Activated CD8-positive, alpha-beta T cell treated with anti-CD3 and anti-CD28 coated beads, Interleukin-2, amount 10 ng/mL, durations not matched to agents 7 days and 5 days (primary cell): ENCODE measurements at regions of chr3 and their contacts with region 1.

Region 1: DNA sequence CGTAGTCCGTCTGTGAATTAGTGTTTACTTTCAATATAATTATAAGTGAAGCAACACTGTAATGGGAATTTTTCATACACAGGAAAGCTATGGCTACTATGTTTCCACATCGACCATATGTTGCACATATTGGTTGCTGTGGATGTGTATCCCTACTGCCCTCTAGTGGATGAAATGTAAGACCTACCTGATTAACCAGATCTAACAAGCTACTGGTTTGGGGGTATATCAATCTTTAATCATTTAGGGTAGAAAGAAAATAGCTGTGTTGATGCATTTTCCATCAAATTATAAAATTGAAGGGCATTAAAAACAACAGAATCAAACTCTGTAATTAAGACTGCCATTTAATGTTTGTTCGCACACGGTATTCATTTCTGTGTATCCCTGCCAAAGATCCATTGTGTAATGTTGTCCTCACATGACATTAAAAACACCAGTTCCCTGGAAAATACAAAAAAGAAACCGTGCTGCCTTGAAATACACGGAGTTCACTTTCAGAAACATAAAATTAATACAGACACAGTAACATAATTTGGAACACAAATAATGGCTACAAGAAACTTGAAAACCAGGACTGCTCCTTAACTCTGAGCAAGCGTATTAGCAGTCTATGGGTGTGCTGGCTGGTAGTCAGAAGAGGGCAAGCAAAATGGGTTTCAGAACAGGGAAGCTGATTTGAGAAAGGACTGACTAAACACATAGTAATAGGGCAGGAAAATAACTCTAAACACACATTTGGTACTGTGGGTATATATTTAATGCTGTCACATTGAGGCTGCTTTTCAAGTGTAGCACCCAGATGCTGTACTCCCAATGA is 125.1 kb downstream of the TIGIT start:
- DNase-seq: peak; percentile 28
- ATAC-seq: peak; percentile 86
- H3K4me3 Mint-ChIP-seq: no peak overlapping the region
- H3K27ac Mint-ChIP-seq: no peak overlapping the region
- H3K4me1 Mint-ChIP-seq: peaks cover 6% of the 10 kb centered on the region
- H3K27me3 Mint-ChIP-seq: no peaks in the 10 kb centered on the region

Region 2: GRCh38 chr3:114143817-114144216 is 275.1 kb before region 1 on chr3:
- CTCF ChIA-PET with region 1: interaction called, 11 read pairs
- POLR2A ChIA-PET with region 1: no interaction called
- DNase-seq: no peak
- ATAC-seq: no peak
- H3K4me3 Mint-ChIP-seq: no peak overlapping the region
- H3K27ac Mint-ChIP-seq: no peak overlapping the region
- H3K4me1 Mint-ChIP-seq: no peaks in the 10 kb centered on the region
- H3K27me3 Mint-ChIP-seq: no peaks in the 10 kb centered on the region

Region 3: GRCh38 chr3:114152519-114153151 is 266.3 kb before region 1 on chr3:
- CTCF ChIA-PET with region 1: interaction called, 63 read pairs
- POLR2A ChIA-PET with region 1: no interaction called
- DNase-seq: peak; percentile 85
- ATAC-seq: peak; percentile 89
- H3K4me3 Mint-ChIP-seq: no peak overlapping the region
- H3K27ac Mint-ChIP-seq: no peak overlapping the region
- H3K4me1 Mint-ChIP-seq: peaks cover 6% of the 10 kb centered on the region
- H3K27me3 Mint-ChIP-seq: no peaks in the 10 kb centered on the region

Region 4: DNA sequence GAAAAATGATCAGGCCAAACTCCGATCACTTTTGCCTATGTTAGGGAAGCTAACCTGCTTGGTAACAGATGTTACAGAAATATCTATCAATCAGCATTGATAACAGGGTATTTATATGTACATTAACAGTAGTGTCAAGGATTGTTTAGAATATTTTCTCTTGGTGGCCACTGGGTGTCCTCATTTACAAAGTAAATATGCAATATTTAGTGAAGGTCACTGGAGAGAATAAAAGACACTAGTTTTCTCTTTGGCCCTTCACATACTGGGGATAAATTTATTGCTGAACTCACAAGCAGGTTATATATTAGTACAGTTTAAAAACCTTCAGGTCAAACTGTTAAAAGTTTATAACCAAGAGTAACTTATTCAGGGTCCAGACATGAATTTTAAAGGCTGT is 56.1 kb before region 1 on chr3:
- CTCF ChIA-PET with region 1: interaction called, 33 read pairs
- POLR2A ChIA-PET with region 1: no interaction called
- DNase-seq: no peak
- ATAC-seq: no peak
- H3K4me3 Mint-ChIP-seq: no peak overlapping the region
- H3K27ac Mint-ChIP-seq: no peak overlapping the region
- H3K4me1 Mint-ChIP-seq: no peaks in the 10 kb centered on the region
- H3K27me3 Mint-ChIP-seq: no peaks in the 10 kb centered on the region

Region 5: DNA sequence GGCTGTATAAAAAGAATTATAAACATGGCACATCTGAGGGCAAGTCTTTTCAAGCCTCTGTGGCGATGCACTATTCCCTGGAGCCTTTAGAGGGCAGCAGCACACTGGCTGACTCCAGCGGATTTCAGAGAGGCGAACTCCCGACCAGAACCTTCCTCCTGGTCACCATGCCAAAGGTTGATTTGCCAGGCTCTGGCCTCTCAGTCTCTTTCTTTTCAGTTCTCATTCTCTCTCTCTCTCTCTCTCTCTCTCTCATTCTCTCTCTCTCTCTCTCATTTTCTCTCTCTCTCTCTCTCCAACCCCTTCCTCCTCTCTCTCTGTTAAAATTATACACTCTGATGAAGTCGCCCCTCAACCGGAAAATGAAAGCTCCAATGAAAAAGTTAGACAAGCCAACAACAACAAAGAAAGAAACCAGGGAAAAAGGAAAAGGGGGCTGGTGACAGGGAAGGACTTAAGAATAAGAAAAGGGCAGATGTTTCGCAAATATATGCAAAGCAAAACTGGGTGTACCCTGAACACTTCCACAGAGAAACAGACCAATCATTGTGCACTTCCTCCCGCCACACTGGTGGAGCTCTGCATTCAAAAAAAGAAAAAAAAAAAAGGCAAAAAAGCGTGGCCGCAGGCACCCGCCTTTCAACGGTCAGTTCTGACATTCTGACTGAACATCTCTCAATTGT is 34.9 kb before region 1 on chr3:
- CTCF ChIA-PET with region 1: interaction called, 252 read pairs
- POLR2A ChIA-PET with region 1: interaction called, 3 read pairs
- DNase-seq: peak; percentile 79
- ATAC-seq: peak; percentile 96
- H3K4me3 Mint-ChIP-seq: peak overlapping the region; percentile 60
- H3K27ac Mint-ChIP-seq: no peak overlapping the region
- H3K4me1 Mint-ChIP-seq: peaks cover 11% of the 10 kb centered on the region
- H3K27me3 Mint-ChIP-seq: no peaks in the 10 kb centered on the region

Region 6: DNA sequence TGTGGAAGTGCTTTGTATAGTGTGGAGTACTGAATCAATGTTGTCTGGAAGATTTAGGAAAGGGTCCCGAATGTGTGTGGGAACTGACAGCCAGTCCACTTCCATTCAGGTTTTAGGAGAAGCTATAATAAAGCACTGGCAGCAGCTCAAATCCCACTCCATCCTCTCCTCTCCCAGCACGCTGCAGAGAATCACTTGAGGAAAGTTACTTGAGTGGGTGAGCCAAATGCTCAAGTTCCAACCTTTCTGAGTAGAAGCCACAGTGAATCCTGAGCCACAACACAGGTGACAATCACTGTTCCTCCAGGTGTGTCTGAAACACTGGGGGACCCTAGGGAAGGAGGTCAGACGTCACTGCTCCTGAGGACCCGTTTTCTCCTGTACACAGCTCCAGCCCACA is 18.6 kb before region 1 on chr3:
- CTCF ChIA-PET with region 1: interaction called, 252 read pairs
- POLR2A ChIA-PET with region 1: no interaction called
- DNase-seq: no peak
- ATAC-seq: no peak
- H3K4me3 Mint-ChIP-seq: no peak overlapping the region
- H3K27ac Mint-ChIP-seq: no peak overlapping the region
- H3K4me1 Mint-ChIP-seq: no peaks in the 10 kb centered on the region
- H3K27me3 Mint-ChIP-seq: no peaks in the 10 kb centered on the region

Region 7: DNA sequence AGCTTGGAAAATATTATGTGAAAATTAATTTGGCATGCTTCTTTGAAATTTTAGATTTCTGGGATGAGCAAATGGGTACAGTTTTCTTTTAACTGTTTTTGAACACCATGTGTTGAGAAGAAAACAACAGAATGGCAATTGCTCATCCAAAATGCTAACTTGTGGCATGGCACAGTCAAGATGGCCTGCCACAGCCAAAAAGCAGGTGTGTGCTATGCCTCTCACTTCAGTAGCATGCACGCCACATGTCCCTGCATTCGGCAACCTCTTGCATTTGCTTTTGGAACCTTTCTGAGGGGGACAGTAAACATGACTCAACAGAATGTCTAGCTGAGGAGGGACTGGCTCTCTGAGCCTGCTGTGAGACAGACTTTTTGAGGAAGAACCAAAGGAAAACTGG is 13.4 kb after region 1 on chr3:
- CTCF ChIA-PET with region 1: interaction called, 18 read pairs
- POLR2A ChIA-PET with region 1: no interaction called
- DNase-seq: no peak
- ATAC-seq: no peak
- H3K4me3 Mint-ChIP-seq: no peak overlapping the region
- H3K27ac Mint-ChIP-seq: no peak overlapping the region
- H3K4me1 Mint-ChIP-seq: no peaks in the 10 kb centered on the region
- H3K27me3 Mint-ChIP-seq: no peaks in the 10 kb centered on the region

Region 8: DNA sequence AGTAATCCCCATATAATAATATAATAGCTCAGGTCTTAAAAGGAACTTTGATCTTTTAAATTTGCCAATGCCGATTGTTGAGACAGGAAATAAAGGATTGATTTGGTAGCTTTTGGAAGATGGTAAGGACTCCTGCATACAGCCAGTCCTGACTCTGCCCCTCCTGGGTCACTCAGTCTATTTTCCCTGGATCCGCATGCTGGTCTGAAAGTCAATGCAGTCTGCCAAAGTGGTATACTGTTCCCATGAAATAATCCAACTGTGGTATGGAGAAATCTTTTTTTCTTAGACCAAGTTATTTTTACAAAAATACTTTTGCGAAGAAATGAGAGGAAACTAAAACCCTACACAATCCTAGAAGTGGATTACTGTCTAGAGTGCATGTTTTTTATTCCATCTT is 66.0 kb after region 1 on chr3:
- CTCF ChIA-PET with region 1: no interaction called
- POLR2A ChIA-PET with region 1: no interaction called
- DNase-seq: no peak
- ATAC-seq: no peak
- H3K4me3 Mint-ChIP-seq: no peak overlapping the region
- H3K27ac Mint-ChIP-seq: no peak overlapping the region
- H3K4me1 Mint-ChIP-seq: peaks cover 15% of the 10 kb centered on the region
- H3K27me3 Mint-ChIP-seq: no peaks in the 10 kb centered on the region